ENCODE measurements at regions of chr4 and their contacts with region 1.

Region 1: DNA sequence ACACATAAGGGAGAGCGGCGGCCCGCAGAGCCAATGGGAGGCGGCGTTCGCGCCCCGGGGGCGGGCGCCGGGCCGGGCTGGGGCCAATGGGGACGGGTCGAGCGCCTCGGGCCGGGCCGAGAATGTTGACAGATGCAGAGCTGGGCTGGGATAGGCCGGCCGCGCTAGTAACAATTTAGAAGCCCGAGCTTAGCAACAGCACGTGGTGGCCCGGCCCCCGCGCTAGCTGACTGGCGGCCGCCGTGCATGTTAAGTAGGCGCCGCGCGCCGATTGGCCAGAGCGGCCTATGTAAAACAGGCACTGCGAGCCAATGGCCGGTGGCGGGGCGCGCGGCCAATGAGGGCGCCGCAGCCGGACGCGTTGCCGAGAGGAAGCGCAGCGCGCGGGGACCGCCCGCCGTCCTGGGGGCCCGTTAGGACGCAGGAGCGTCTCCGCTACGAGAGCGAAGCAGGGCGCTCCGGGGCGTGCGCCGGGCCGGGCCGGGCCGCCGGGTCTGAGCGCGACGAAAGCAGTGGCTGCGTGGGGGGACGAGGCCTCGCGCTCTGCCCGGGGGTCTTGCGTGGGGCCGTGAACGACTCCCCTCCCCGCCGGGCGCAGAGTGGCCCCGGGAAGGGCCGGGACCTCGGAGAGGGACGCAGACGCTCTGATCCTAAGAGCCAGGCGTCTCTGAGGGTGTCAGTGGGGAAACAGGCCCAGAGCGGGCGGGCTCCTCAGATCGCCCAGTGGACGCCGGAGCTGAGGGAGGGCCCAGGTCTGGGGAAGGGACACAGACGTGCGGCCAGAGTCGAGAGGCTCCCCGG is 434 bp upstream of the MXD4 start:
- DNase-seq: peak; percentile 95
- ATAC-seq: peak; percentile 89
- H3K4me3 Mint-ChIP-seq: peak overlapping the region; percentile 78
- H3K27ac Mint-ChIP-seq: peak overlapping the region; percentile 85
- H3K4me1 Mint-ChIP-seq: peaks cover 18% of the 10 kb centered on the region
- H3K27me3 Mint-ChIP-seq: no peaks in the 10 kb centered on the region
- CTCF ChIP-seq: no peak

Region 2: GRCh38 chr4:2226261-2226660 is 36.1 kb before region 1 on chr4:
- CTCF ChIA-PET with region 1: no interaction called
- POLR2A ChIA-PET with region 1: no interaction called
- intact Hi-C with region 1: no loop called
- DNase-seq: no peak
- ATAC-seq: no peak
- H3K4me3 Mint-ChIP-seq: no peak overlapping the region
- H3K27ac Mint-ChIP-seq: no peak overlapping the region
- H3K4me1 Mint-ChIP-seq: no peaks in the 10 kb centered on the region
- H3K27me3 Mint-ChIP-seq: no peaks in the 10 kb centered on the region
- CTCF ChIP-seq: no peak

Region 3: GRCh38 chr4:2281575-2282343 is 19.4 kb after region 1 on chr4:
- CTCF ChIA-PET with region 1: no interaction called
- POLR2A ChIA-PET with region 1: interaction called, 36 read pairs
- intact Hi-C with region 1: loop called (anchors 1 kb)
- DNase-seq: peak; percentile 57
- ATAC-seq: peak; percentile 93
- H3K4me3 Mint-ChIP-seq: peak overlapping the region; percentile 70
- H3K27ac Mint-ChIP-seq: peak overlapping the region; percentile 97
- H3K4me1 Mint-ChIP-seq: peaks cover 35% of the 10 kb centered on the region
- H3K27me3 Mint-ChIP-seq: no peaks in the 10 kb centered on the region
- CTCF ChIP-seq: no peak

Region 4: GRCh38 chr4:2330091-2331042 is 68.0 kb after region 1 on chr4:
- CTCF ChIA-PET with region 1: no interaction called
- POLR2A ChIA-PET with region 1: interaction called, 5 read pairs
- intact Hi-C with region 1: loop called (anchors 5 kb)
- DNase-seq: no peak
- ATAC-seq: no peak
- H3K4me3 Mint-ChIP-seq: no peak overlapping the region
- H3K27ac Mint-ChIP-seq: no peak overlapping the region
- H3K4me1 Mint-ChIP-seq: peaks cover 15% of the 10 kb centered on the region
- H3K27me3 Mint-ChIP-seq: peaks cover 3% of the 10 kb centered on the region
- CTCF ChIP-seq: no peak

Region 5: DNA sequence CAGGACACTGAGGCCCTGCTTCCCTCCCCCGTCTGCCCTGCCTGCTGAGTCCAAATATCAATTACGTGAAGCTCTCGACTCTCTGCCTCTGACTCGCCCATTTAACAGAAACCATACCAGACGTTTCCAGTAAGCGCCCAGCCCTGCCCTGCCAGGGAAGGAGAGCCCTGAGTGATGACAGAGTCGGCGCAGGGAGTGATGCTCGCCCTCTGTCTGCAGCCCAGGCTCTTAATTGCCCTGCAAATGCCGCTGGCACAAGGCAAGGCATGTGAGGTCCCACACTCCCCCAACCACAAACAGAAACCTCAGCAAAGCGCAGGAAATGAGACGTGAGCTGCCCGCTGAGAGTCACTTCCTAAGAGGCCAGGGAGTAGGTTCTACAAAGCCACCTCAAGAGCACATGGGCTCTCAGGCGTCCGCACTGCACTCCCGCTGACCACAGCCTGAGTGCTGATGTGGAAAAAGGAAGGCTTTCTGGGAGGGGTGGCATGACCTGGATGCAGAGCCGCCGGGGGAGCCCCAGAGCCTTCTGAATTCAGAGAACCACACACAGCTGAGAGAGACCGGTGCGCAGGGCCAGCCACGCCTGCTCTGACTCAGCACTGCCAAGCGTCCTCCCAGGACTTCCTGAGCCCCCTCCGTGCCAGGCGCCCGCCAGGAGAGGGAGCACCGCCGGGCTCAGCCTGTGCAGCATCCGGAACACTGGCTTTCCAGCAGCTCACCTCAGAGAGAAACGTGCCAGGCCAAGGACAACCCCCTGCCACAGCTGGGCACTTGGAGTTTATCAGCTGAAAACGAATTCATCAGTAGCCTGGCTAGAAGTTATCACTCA is 150.8 kb after region 1 on chr4:
- CTCF ChIA-PET with region 1: no interaction called
- POLR2A ChIA-PET with region 1: interaction called, 13 read pairs
- intact Hi-C with region 1: no loop called
- DNase-seq: peak; percentile 55
- ATAC-seq: peak; percentile 70
- H3K4me3 Mint-ChIP-seq: peak overlapping the region; percentile 81
- H3K27ac Mint-ChIP-seq: peak overlapping the region; percentile 73
- H3K4me1 Mint-ChIP-seq: peaks cover 38% of the 10 kb centered on the region
- H3K27me3 Mint-ChIP-seq: peaks cover 13% of the 10 kb centered on the region
- CTCF ChIP-seq: no peak

Region 6: DNA sequence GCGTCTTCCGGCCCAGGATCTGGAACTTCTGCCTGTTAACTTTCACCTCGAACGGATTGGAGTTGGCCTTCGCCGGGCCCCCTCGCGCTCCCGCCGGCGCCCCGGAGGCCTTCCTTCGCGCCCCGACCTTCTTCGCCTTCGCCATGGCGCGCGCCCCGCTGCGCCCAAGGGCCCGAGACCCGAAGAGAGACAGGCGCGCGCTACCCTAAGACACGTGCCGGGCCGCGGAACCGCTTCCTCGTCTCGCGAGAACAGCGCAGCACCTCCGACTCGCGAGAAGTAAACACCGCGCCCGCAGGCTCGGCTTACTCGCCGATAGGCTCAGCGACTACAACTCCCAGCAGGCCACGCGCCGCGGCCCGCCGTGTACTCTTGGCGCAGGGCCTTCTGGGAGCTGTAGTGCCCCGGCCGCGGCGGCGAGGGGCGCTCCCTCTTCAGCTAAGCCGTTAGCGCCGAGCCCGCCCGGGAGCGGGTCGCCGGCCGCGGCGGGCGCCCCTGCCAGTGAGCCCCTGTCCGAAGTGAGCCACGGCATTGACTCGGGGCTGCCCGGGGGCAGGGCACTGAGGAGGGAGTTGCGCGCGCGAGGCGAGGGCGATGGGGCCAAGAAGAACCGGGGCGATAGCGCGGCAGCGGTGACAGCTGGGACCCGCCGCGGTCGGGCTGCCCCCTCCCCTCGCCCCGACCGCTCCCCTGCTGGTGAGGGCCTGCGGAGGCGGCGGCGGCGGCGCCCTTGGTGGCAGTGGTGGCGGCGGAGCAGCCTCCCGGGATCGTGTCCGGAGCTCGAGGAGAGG is 701.0 kb after region 1 on chr4 and contains the starts of genes GRK4 and NOP14:
- CTCF ChIA-PET with region 1: no interaction called
- POLR2A ChIA-PET with region 1: no interaction called
- intact Hi-C with region 1: loop called (anchors 1 kb)
- DNase-seq: peak; percentile 89
- ATAC-seq: peak; percentile 91
- H3K4me3 Mint-ChIP-seq: peak within 1 kb of the TSS; percentile 91
- H3K27ac Mint-ChIP-seq: peak within 1 kb of the TSS; percentile 92
- H3K4me1 Mint-ChIP-seq: peaks cover 29% of the 10 kb centered on the region
- H3K27me3 Mint-ChIP-seq: no peaks in the 10 kb centered on the region
- CTCF ChIP-seq: no peak
- total RNA-seq, gene GRK4: 1.4 and 2.1 TPM in 2 replicates
- total RNA-seq, gene NOP14: 56.3 and 57.3 TPM in 2 replicates